ENCODE measurements at regions of chr11 and their contacts with region 1.

Region 1: GRCh38 chr11:44556735-44557409 is 8.6 kb upstream of the CD82 start:
- DNase-seq: no peak
- H3K4me3 ChIP-seq: no peak overlapping the region
- CTCF ChIP-seq: peak; percentile 75

Region 2: GRCh38 chr11:44572884-44573283 is 16.0 kb after region 1 on chr11:
- CTCF ChIA-PET with region 1: interaction called, 14 read pairs
- POLR2A ChIA-PET with region 1: no interaction called
- DNase-seq: no peak
- H3K4me3 ChIP-seq: no peak overlapping the region
- CTCF ChIP-seq: no peak

Region 3: DNA sequence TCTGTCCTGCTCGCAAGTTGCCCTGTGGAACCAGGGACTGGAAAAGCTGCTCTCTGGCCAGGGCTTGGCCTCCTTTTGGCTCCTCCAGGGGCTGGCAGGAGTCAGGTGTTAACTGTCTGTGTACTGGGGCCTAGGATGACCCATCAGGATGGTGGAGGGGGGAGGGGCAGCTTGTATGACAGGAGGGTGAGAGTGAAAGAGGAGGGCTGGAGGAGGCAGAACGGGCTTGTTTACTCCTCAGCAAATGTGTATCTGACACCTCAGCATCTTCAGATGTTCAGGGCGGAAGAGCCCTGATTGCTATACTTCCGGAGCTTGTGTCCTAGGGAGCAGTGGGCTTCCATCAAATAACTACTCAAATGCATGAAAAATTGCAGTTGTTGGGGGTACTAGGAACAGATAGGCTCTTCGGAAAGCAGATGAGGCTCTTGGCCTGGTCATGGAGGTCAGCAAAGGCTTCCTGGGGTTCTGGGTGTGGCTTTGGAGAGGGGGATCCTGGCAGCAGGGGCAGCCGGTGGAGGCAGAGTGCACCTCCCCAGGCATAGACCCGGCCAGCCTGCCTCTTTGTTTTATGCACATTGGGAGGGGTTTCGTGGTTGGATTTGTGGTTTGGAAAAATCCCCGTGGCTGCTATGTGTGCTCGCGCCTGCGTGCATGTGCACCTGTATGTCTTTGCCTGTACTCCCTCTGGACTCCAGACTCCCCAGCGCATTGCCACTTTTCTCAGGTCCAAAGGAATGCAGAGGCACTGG is 39.8 kb after region 1 on chr11:
- CTCF ChIA-PET with region 1: interaction called, 20 read pairs
- POLR2A ChIA-PET with region 1: interaction called, 3 read pairs
- DNase-seq: no peak
- H3K4me3 ChIP-seq: no peak overlapping the region
- CTCF ChIP-seq: no peak

Region 4: DNA sequence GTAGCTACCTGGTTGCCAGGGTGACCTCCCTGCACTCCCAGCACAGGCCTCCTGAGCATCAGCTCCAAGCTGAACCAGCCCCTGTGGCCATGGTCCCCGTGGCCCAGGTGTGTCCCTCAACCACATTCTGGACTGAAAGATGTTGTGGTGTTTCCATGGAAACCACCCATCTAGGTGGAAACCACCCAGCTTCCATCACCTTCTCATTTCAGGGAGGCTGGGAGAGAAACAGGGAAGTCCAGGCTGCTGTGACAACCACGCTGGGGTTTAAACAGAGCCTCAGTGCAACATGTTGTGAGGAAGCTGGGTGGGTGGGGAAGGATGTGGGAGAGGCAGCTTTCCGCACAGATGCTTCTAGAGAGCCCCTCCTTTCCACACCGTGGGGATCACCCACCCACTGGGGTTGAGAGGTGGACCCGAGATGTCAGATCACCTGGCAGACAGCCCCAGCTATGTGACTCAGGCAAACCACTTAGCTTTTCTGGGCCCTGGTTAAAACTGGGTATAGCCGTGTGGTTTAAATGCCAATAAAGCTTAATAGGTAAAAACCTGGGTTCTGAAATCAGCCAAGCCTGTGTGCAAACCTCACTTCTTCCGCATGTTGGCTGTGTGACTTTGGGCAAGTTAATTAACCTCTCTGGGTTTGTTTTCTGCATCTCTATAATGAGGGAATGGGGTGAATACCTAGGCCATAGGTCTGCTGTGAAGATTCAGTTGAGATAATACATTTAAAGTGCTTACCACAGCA is 55.0 kb after region 1 on chr11:
- CTCF ChIA-PET with region 1: interaction called, 995 read pairs
- POLR2A ChIA-PET with region 1: interaction called, 4 read pairs
- DNase-seq: no peak
- H3K4me3 ChIP-seq: no peak overlapping the region
- CTCF ChIP-seq: no peak

Region 5: DNA sequence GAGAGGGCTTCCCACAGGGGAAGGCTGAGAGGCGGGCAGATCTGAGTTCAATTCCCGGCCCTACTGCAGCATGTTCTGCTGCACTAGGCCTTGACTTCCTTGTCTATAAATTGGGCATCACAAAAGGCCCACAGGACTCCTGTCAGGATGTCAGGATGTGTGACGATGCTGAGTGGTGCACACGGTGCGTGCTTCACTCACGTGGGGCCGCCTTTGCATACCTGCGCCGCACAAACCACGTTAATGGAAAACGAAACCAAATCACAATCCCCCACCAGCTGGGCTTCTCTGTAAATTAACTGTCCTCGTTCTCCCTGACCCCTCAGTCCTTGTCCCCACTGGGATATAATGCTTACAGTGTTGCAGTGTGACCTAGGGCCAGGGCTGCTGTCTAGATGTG is 137.6 kb after region 1 on chr11:
- CTCF ChIA-PET with region 1: no interaction called
- POLR2A ChIA-PET with region 1: no interaction called
- DNase-seq: no peak
- H3K4me3 ChIP-seq: no peak overlapping the region
- CTCF ChIP-seq: no peak

Region 6: GRCh38 chr11:44977476-44977984 is 420.7 kb after region 1 on chr11:
- CTCF ChIA-PET with region 1: no interaction called
- POLR2A ChIA-PET with region 1: no interaction called
- DNase-seq: no peak
- H3K4me3 ChIP-seq: no peak overlapping the region
- CTCF ChIP-seq: peak; percentile 8

Measured in AG04449 (cell line).